Heart left ventricle (tissue), 16 donors: ENCODE measurements at regions of chr1 and their contacts with region 1.

Region 1: DNA sequence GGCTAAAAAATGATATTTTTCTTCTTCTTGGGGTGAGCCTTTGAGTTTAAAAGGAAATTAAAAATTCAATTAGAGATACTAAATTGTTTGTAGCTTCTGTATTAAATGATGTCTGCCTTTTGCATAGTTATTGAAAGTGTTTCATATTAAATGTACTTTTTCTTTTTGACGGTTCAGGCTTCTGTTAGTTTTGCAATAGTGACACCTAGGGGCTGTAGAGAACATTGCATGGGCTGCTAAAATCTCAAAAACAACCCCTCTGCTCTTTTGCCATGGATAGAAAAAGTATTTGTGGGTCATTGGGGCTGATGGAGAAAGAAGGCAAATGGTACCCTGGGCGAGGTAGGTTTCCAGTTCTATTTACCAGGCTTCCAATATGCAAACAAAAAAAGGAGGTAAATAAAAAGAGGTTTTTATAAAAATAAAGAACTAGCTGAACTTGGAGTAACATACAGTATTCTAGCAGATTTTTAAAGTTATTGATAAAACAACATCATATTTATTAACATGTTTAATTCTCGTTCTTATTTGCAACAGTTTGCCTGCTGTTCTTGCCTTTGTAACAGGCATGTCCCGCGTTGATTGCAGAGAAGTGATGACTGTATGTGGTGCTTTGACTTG is 115.4 kb upstream of the HOOK1 start:
- DNase-seq: no peak
- ATAC-seq: peak in 1 of 4 donors; percentile 41
- H3K4me3 ChIP-seq: no peak overlapping the region
- H3K27ac ChIP-seq: peak overlapping the region in 2 of 12 donors; percentile 19 to 23
- H3K4me1 ChIP-seq: peaks cover 0 to 54% (median 17%) of the 10 kb centered on the region in 12 donors
- H3K27me3 ChIP-seq: no peaks in the 10 kb centered on the region
- CTCF ChIP-seq: peak; percentile 86 to 97 (median 94)
- POLR2A ChIP-seq: no peak

Region 2: GRCh38 chr1:58739856-58740466 is 959.4 kb before region 1 on chr1:
- intact Hi-C with region 1: loop called (anchors 1 to 5 kb)
- DNase-seq: peak in 1 of 5 donors; percentile 20
- ATAC-seq: peak in 1 of 4 donors; percentile 43
- H3K4me3 ChIP-seq: no peak overlapping the region
- H3K27ac ChIP-seq: no peak overlapping the region
- H3K4me1 ChIP-seq: peaks cover 0 to 21% (median 0%) of the 10 kb centered on the region in 12 donors
- H3K27me3 ChIP-seq: no peaks in the 10 kb centered on the region
- CTCF ChIP-seq: peak; percentile 72 to 92 (median 88)
- POLR2A ChIP-seq: no peak

Region 3: GRCh38 chr1:58768971-58769808 is 930.1 kb before region 1 on chr1:
- intact Hi-C with region 1: loop called in 2 of 10 experiments (anchors 10 kb)
- DNase-seq: peak; percentile 72 to 86 (median 74)
- ATAC-seq: peak in 2 of 4 donors; percentile 10 to 51
- H3K4me3 ChIP-seq: no peak overlapping the region
- H3K27ac ChIP-seq: no peak overlapping the region
- H3K4me1 ChIP-seq: peaks cover 3 to 26% (median 18%) of the 10 kb centered on the region in 12 donors
- H3K27me3 ChIP-seq: no peaks in the 10 kb centered on the region
- CTCF ChIP-seq: peak; percentile 75 to 92 (median 86)
- POLR2A ChIP-seq: no peak

Region 4: DNA sequence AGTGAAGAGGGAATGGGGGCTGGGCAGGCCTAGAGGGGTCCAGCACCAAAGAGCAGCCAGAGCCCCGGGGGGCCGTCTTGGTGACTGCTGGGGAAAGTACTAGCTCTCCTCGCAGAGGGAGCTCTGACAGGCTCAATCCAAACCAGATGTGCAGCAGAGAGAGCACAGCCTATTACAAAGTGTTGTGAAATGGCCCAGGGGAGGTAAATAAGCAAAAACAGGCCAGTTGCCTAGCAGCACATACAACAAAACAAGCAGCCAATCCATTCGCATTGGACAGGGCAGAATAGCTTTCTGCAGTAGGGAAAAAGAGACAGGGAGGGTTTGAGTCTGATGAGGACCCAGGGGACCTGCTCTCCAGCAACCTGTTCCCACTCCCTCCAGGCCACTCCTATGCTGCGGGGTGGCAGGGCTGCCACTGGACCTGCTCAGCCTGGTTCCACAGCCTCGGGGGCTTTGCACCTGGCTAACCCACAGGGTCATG is 642.1 kb before region 1 on chr1:
- intact Hi-C with region 1: loop called in 1 of 10 experiments (anchors 10 kb)
- DNase-seq: peak; percentile 81 to 91 (median 84)
- ATAC-seq: peak; percentile 89 to 93 (median 91)
- H3K4me3 ChIP-seq: no peak overlapping the region
- H3K27ac ChIP-seq: peak overlapping the region; percentile 35 to 77 (median 58)
- H3K4me1 ChIP-seq: peaks cover 0 to 42% (median 26%) of the 10 kb centered on the region in 12 donors
- H3K27me3 ChIP-seq: no peaks in the 10 kb centered on the region
- CTCF ChIP-seq: peak in 3 of 12 donors; percentile 12 to 37 (median 22)
- POLR2A ChIP-seq: peak in 1 of 2 donors; percentile 57

Region 5: DNA sequence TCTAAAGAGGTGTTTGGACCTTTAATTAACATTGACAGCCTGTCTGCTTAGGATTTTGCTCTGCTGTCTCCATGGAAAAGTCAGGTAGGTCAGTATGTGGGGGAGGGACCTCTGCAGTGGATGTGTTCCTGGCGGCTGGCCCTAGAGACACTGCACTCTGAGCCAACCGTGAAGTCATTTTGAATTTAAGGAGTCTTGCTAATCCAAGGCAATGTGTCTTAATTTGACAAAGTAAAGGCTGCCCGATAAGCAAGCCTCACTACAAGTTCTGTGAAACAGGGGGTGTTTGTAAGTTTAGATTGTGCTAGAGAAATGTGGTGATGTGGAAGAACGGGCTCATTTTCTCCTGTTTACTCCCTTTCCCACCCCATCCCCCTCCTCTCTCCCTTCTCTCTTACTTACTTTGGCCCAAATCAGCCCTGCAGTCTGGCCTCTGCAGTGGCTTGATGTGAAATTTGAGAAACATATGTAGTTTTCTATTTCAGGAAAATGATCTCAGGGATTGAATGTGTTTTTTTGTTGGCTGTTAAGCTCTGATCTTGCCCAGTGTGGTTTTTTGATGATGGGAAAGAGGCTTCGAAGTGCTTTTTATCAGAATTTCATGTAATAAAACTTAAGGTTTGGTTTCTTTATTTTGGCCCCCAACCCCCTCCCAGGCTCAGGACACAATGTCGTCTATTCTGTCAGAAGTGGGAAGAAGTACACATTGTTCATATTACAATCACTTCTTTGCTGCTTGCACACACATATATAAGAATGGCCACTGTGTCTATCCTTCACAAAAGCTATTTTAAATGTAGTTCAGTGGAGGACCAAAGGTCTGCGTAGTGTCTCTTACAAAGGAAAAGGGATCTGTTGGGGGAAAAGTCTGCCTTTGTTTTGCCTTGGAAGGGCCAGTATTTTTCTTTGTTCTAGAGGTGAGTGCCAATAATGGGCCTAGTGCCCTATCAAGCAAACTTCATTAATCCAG is 305.8 kb before region 1 on chr1:
- intact Hi-C with region 1: loop called in 1 of 10 experiments (anchors 5 kb)
- DNase-seq: peak; percentile 76 to 87 (median 85)
- ATAC-seq: peak; percentile 96 to 98 (median 98)
- H3K4me3 ChIP-seq: peak overlapping the region in 3 of 12 donors; percentile 4 to 10 (median 5)
- H3K27ac ChIP-seq: peak overlapping the region; percentile 67 to 95 (median 88)
- H3K4me1 ChIP-seq: peaks cover 0 to 39% (median 24%) of the 10 kb centered on the region in 12 donors
- H3K27me3 ChIP-seq: no peaks in the 10 kb centered on the region
- CTCF ChIP-seq: no peak
- POLR2A ChIP-seq: no peak

Region 6: DNA sequence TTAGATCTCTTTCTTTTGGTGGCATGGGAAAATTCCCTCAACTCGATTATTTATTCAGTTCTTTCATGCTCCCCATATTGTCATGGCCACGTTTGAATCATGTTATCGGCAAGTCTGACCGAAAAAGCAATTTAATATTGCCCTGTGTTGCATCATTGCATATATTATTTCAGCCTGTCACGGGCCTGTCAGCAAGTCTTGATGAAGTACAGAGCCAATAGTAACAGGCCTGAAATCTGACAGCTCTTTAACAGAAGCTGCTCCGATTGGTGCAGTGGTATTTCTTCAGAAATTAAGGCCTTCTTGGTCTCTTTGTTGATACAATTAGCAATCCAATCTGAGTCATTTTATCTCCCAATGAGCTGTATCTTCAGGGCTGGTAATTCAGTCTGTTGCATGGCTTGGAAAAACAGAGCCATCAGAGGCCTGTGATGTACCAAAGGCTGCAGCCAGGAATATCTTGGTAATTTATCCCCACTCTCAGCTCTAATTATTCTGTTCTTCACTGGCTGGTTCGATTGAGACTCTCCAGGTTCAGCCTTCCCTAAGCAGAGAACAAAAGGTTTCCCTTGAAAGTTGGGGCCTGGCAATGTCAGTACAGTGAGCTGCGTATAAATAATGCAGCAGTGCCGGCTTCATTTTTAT is 253.0 kb before region 1 on chr1:
- intact Hi-C with region 1: loop called in 1 of 10 experiments (anchors 10 kb)
- DNase-seq: no peak
- ATAC-seq: peak; percentile 69 to 82 (median 77)
- H3K4me3 ChIP-seq: no peak overlapping the region
- H3K27ac ChIP-seq: peak overlapping the region in 11 of 12 donors; percentile 32 to 74 (median 60)
- H3K4me1 ChIP-seq: peaks cover 0 to 44% (median 20%) of the 10 kb centered on the region in 12 donors
- H3K27me3 ChIP-seq: no peaks in the 10 kb centered on the region
- CTCF ChIP-seq: no peak
- POLR2A ChIP-seq: no peak